Body of pancreas (tissue), 4 donors: ENCODE measurements at regions of chr3 and their contacts with region 1.

Region 1: DNA sequence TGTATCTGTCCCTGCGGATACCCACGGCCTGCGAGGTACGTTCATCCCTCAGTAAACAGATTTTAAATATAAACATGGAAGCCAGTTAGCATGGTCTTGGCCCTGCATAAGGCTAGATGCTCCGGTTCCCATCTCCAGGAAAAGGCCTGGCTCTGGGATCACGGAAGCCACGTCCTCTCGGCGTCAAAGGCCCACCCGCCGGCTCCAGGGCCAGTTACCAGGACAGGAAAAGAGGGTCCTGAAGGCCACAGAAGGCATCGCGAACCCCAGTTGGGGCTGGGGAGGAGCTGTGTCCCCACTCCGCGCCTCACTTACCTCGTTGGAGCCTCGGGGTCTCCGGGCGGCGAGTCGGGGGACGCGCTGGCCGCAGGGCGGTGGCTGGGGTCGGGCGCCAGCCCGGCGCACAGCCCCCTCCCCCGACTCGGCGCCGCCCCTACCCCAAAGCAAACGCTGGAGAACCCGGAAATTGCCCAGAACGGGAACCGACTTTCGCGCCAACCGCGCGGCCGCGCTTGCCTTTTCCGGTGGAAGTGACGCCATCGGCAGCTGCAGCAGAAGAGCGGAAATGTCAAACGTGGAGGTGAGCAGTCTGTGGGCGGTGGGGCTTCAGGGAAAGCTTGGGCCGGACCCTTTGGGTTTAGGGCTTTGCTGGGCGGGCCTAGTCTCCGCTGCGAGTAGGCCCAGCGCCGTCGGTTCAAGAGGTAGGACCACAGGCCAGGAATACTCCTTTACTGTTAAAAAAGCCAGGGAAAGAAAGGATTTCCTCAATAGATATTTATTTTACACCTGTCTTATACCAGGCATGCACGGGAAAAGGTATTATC is at the start of gene TOPBP1:
- DNase-seq: peak; percentile 74 to 82 (median 80)
- ATAC-seq: peak; percentile 88
- H3K4me3 ChIP-seq: peak within 1 kb of the TSS; percentile 79 to 93
- H3K27ac ChIP-seq: peak within 1 kb of the TSS; percentile 53 to 80 (median 72)
- H3K4me1 ChIP-seq: peaks cover 29% of the 10 kb centered on the region
- H3K27me3 ChIP-seq: no peaks in the 10 kb centered on the region
- CTCF ChIP-seq: no peak
- POLR2A ChIP-seq: peak; percentile 20 to 74 (median 66)
- total RNA-seq, gene TOPBP1: 22.6 to 34.3 TPM

Region 2: GRCh38 chr3:133805527-133806475 is 144.1 kb after region 1 on chr3 and contains the start of gene SRPRB:
- intact Hi-C with region 1: loop called (anchors 10 kb)
- DNase-seq: peak; percentile 96 to 97 (median 97)
- ATAC-seq: peak; percentile 100
- H3K4me3 ChIP-seq: peak within 1 kb of the TSS; percentile 92 to 93
- H3K27ac ChIP-seq: peak within 1 kb of the TSS; percentile 83 to 91 (median 88)
- H3K4me1 ChIP-seq: peaks cover 23% of the 10 kb centered on the region
- H3K27me3 ChIP-seq: no peaks in the 10 kb centered on the region
- CTCF ChIP-seq: peak in 3 of 7 experiments; percentile 5 to 17 (median 17)
- POLR2A ChIP-seq: peak; percentile 80 to 93 (median 89)
- total RNA-seq, gene SRPRB: 28.3 to 39.4 TPM